ENCODE measurements at regions of chr6 and their contacts with region 1.

Region 1: DNA sequence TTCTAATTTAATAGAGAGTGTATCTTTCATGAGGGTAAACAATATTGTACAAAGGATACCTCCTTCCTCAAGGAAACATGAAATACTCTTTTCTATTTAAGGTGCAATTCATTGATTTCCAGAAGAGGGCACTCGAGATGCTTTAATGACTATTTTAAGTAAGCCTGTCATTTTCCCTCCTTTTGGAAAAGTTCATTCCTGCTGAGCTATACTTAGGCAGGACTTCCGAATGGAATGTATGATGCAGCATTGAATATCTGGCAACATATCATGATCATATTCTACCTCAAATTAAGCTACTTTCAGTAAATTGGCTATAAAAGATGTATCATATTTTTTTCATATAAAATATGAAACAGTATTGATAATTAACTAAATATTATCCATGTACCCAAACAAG is 5.0 kb downstream of the DST start:
- DNase-seq: peak; percentile 54
- H3K4me3 ChIP-seq: no peak overlapping the region
- H3K27ac ChIP-seq: no peak overlapping the region
- H3K27me3 ChIP-seq: no peaks in the 10 kb centered on the region
- CTCF ChIP-seq: peak; percentile 61

Region 2: GRCh38 chr6:56624046-56624727 is 13.5 kb before region 1 on chr6:
- CTCF ChIA-PET with region 1: interaction called, 15 read pairs
- POLR2A ChIA-PET with region 1: no interaction called
- DNase-seq: no peak
- H3K4me3 ChIP-seq: no peak overlapping the region
- H3K27ac ChIP-seq: no peak overlapping the region
- H3K27me3 ChIP-seq: no peaks in the 10 kb centered on the region
- CTCF ChIP-seq: no peak

Region 3: DNA sequence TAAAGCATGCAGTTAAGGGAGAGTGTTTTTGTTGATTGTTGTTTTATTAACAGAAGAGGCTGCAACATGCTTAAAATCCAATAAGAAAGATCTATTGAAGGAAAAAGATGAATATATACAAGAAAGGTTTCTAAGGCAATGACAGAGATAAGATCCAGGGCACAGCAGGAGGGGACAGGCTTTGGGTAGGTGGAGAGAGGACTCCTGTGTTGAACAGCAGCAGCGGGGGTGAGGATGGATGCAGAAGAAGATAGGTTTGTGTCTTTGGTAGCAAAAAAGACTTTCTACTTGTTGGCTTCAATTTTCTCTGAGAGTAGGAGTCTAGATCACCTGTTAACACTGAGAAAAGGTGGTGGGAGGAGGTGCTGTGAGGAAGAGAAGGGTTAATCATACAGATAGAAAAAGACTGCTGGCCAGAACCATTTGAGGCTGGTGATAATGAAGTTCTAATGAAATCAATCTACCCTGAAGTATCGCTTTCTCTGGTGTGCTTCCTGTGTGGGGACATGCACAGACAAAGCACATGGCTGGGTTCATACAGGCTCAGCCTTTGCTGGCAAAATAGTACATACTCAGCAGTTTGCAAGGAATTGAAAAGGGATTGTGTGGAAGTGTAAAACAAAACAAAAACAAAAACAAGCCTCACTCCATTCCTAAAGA is 22.2 kb after region 1 on chr6:
- CTCF ChIA-PET with region 1: no interaction called
- POLR2A ChIA-PET with region 1: no interaction called
- DNase-seq: no peak
- H3K4me3 ChIP-seq: no peak overlapping the region
- H3K27ac ChIP-seq: no peak overlapping the region
- H3K27me3 ChIP-seq: no peaks in the 10 kb centered on the region
- CTCF ChIP-seq: no peak

Region 4: DNA sequence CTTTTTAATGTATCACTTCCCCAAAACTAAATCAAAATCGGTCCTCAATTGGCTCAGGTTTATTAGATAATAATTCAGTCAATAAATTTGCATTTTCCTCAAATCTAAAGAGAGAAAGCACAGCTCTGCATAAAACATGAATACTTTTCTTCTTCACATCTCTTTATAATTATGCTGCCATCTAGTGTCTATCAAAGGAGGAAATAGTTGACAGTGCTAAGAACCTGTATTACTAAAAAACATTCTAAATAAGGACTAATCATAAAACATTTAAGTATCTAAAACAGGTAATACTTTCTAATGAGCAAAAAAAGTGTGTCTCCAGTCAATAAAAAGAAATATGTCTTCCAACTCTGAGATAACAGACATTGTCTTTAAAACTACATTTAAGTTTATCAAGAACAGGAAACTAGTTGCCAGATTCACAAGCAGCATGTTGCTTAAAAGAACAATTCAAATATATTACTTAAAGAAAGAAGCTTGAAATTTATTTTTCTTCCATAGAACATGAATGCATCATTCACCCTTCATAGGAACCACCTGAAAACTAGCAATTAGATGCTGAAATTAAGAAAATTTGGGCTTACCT is 61.5 kb after region 1 on chr6:
- CTCF ChIA-PET with region 1: interaction called, 73 read pairs
- POLR2A ChIA-PET with region 1: no interaction called
- DNase-seq: no peak
- H3K4me3 ChIP-seq: no peak overlapping the region
- H3K27ac ChIP-seq: no peak overlapping the region
- H3K27me3 ChIP-seq: no peaks in the 10 kb centered on the region
- CTCF ChIP-seq: peak; percentile 52

Region 5: GRCh38 chr6:56827908-56828649 is 190.4 kb after region 1 on chr6:
- CTCF ChIA-PET with region 1: interaction called, 11 read pairs
- POLR2A ChIA-PET with region 1: no interaction called
- DNase-seq: no peak
- H3K4me3 ChIP-seq: no peak overlapping the region
- H3K27ac ChIP-seq: no peak overlapping the region
- H3K27me3 ChIP-seq: no peaks in the 10 kb centered on the region
- CTCF ChIP-seq: no peak

Region 6: GRCh38 chr6:56851541-56852259 is 214.1 kb after region 1 on chr6:
- CTCF ChIA-PET with region 1: interaction called, 46 read pairs
- POLR2A ChIA-PET with region 1: interaction called, 3 read pairs
- DNase-seq: peak; percentile 57
- H3K4me3 ChIP-seq: peak overlapping the region; percentile 69
- H3K27ac ChIP-seq: peak overlapping the region; percentile 74
- H3K27me3 ChIP-seq: no peaks in the 10 kb centered on the region
- CTCF ChIP-seq: peak; percentile 69